WTC11 (cell line): ENCODE measurements at regions of chr17 and their contacts with region 1.

Region 1: DNA sequence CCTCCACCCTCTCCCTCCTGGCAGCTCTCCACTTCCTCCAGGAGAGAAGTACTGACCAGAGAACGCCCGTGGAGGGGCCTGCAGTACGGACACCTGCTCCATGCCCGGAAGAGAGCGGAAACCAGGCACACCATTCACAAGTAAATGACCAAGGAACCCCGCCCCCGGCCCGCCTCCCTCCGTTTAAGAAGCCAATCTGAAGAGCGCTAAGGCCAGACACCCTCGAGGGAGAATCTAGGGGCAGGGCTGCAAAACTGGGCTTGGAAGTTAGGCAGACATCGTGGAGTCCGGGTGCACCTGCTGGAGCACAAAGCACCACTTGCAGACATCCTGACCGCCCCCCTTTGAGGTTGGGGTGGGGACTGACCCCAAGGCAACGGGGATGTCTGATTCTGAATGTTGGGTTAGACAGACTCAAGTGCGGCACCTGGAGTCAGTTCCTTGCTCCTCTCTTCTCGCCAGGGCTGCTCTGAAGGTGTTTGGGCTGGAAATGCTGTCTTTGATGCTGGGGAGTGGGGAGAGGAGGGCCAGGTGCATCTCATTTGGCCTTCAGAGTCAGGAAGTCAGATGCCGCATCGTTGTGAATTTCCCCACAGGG is 964 bp upstream of the FAAP100 start:
- DNase-seq: peak; percentile 76
- ATAC-seq: peak; percentile 75
- H3K4me3 Mint-ChIP-seq: peak overlapping the region; percentile 85
- H3K27ac Mint-ChIP-seq: peak overlapping the region; percentile 92
- H3K4me1 Mint-ChIP-seq: peaks cover 20% of the 10 kb centered on the region
- H3K27me3 Mint-ChIP-seq: no peaks in the 10 kb centered on the region
- CTCF ChIP-seq: no peak

Region 2: GRCh38 chr17:81519284-81519955 is 33.7 kb before region 1 on chr17:
- CTCF ChIA-PET with region 1: interaction called, 11 read pairs
- POLR2A ChIA-PET with region 1: interaction called, 4 read pairs
- DNase-seq: peak; percentile 68
- ATAC-seq: peak; percentile 19
- H3K4me3 Mint-ChIP-seq: peak overlapping the region; percentile 42
- H3K27ac Mint-ChIP-seq: no peak overlapping the region
- H3K4me1 Mint-ChIP-seq: peaks cover 30% of the 10 kb centered on the region
- H3K27me3 Mint-ChIP-seq: peaks cover 42% of the 10 kb centered on the region
- CTCF ChIP-seq: peak; percentile 51

Region 3: GRCh38 chr17:81537343-81537855 is 15.7 kb before region 1 on chr17:
- CTCF ChIA-PET with region 1: interaction called, 14 read pairs
- POLR2A ChIA-PET with region 1: interaction called, 4 read pairs
- DNase-seq: peak; percentile 81
- ATAC-seq: peak; percentile 79
- H3K4me3 Mint-ChIP-seq: peak overlapping the region; percentile 27
- H3K27ac Mint-ChIP-seq: no peak overlapping the region
- H3K4me1 Mint-ChIP-seq: no peaks in the 10 kb centered on the region
- H3K27me3 Mint-ChIP-seq: peaks cover 23% of the 10 kb centered on the region
- CTCF ChIP-seq: peak; percentile 60